Activated CD4-positive, alpha-beta memory T cell treated with anti-CD3 and anti-CD28 coated beads, Interleukin-2, amount 10 ng/mL, durations not matched to agents 7 days and 5 days (primary cell): ENCODE measurements at regions of chr4 and their contacts with region 1.

Region 1: GRCh38 chr4:48944756-48945241 is 38.2 kb upstream of the OCIAD2 start:
- DNase-seq: peak; percentile 63
- H3K4me3 Mint-ChIP-seq: no peak overlapping the region
- H3K27ac Mint-ChIP-seq: no peak overlapping the region
- H3K4me1 Mint-ChIP-seq: peaks cover 7% of the 10 kb centered on the region
- H3K27me3 Mint-ChIP-seq: peaks cover 11% of the 10 kb centered on the region

Region 2: DNA sequence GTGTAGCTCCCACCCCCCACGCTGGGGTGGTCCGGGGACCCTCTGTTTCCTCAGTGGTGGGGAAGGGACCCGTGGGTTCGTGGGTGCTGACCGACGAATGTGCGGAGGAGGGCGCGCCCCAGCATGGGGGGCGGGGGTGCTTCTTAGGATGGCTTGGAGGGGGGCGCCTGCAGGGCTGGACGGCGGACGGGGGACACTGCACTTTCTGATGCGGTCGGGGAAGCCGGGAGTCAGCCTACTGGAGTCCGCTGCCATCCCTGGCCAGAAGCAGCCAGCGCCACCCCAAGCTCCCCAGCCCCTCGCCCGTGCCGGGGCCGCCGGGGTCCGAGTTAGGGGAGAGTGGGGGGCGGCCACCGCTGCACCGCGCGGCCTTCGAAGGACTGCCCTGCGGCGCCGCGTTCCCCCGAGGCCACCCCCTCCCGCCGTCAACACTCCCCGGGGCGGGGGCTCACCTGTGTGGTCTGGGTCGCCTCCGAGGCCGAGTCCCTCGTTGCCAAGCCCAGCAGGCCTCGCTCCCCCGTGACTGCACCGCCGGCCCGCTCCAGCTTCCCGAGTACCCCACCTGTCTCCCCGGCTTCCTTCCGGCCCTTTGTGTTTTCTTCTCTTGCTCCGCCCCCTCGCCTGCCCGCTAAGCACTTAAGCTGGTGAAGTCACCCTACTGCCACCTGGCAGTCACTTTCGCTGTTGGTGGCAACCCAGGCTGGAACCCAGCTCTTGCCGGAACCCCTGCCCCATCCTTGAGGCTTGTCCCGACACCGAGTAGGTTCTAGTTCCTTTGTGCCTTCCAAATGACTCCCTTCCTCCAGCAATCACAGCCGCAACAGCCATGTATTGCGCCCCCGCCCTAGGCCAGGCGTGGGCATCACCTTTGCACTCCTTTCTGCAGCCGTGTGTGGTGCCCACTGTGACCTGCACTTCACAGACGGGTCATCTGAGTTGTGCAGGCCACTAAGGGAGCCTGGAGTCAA is 38.3 kb before region 1 on chr4 and contains the start of gene OCIAD2:
- CTCF ChIA-PET with region 1: interaction called, 11 read pairs
- POLR2A ChIA-PET with region 1: interaction called, 6 read pairs
- DNase-seq: peak; percentile 85
- H3K4me3 Mint-ChIP-seq: peak within 1 kb of the TSS; percentile 88
- H3K27ac Mint-ChIP-seq: peak within 1 kb of the TSS; percentile 76
- H3K4me1 Mint-ChIP-seq: peaks cover 39% of the 10 kb centered on the region
- H3K27me3 Mint-ChIP-seq: no peaks in the 10 kb centered on the region
- total RNA-seq, gene OCIAD2: 89.1 to 94.5 TPM

Region 3: GRCh38 chr4:48924416-48924815 is 20.4 kb before region 1 on chr4:
- CTCF ChIA-PET with region 1: interaction called, 13 read pairs
- POLR2A ChIA-PET with region 1: no interaction called
- DNase-seq: no peak
- H3K4me3 Mint-ChIP-seq: no peak overlapping the region
- H3K27ac Mint-ChIP-seq: no peak overlapping the region
- H3K4me1 Mint-ChIP-seq: peaks cover 12% of the 10 kb centered on the region
- H3K27me3 Mint-ChIP-seq: peaks cover 5% of the 10 kb centered on the region